ENCODE measurements at regions of chr17 and their contacts with region 1.

Region 1: DNA sequence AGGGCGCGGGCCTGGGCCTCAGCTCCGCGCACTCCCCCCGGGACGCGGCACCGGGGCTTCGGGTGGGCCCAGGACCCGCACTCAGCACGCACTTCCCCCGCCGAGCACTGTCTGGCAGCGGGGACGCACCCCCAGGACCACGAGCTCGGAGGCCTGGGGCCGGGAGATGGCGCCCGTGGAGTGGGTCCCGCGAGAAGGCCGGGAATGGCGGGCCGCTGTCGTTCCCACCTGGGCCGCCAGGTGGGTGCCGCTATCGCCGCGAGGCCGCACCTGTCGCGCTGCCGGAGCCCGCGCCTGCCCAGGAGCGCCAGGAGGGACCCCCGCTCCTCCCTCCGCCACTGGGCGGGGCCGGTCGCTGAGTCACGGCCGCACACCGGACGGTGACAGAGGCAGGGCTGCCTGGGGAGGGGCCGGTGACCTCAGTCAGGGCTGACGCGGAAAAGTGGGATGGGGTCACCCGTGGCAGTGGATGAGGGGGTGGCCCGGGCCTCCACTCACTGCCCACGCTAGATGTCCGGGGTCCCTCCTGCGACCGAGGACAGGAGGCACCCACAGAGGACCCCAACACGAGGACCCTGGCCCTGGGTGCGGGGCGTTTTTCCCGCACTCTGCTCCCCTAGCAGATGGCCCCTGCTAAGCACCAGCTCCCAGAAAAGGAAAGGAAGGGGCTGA is 6.8 kb upstream of the ACTG1 start:
- DNase-seq: peak; percentile 59 to 86
- ATAC-seq: peak; percentile 41 to 61 (median 52)
- H3K4me3 ChIP-seq: peak overlapping the region; percentile 38
- H3K4me3 Mint-ChIP-seq: peak overlapping the region; percentile 37
- H3K27ac ChIP-seq: peak overlapping the region; percentile 46
- H3K27ac Mint-ChIP-seq: peak overlapping the region in 1 of 2 donors; percentile 45
- H3K4me1 ChIP-seq: peaks cover 53% of the 10 kb centered on the region
- H3K4me1 Mint-ChIP-seq: peaks cover 16 to 30% of the 10 kb centered on the region in 2 donors
- H3K27me3 ChIP-seq: peaks cover 9% of the 10 kb centered on the region
- H3K27me3 Mint-ChIP-seq: no peaks in the 10 kb centered on the region
- CTCF ChIP-seq: peak; percentile 45

Region 2: DNA sequence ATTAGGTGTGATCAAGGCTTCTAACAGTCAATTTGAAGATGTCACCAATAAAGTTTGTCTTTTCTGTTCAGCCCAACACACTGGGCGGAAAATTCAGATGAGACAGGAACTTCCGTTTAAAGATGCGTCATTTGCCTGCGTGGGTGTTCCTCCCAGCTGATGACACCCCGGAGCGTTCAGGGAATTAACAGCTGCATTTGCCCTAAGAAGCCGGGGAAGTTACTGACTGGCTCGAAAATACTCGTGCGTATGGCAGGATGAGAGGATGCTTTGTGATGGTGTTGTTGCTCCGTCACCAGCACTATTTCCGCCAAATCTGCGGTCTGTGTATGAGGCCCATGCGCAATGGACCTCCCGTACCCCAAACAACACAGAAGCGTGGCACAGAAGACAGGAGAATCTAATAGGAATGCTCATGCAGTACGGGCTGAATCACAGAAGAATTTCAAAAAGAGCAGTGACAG is 366.0 kb before region 1 on chr17:
- intact Hi-C with region 1: no loop called
- DNase-seq: peak in 1 of 2 donors; percentile 40
- ATAC-seq: no peak
- H3K4me3 ChIP-seq: no peak overlapping the region
- H3K4me3 Mint-ChIP-seq: no peak overlapping the region
- H3K27ac ChIP-seq: no peak overlapping the region
- H3K27ac Mint-ChIP-seq: no peak overlapping the region
- H3K4me1 ChIP-seq: peaks cover 23% of the 10 kb centered on the region
- H3K4me1 Mint-ChIP-seq: peaks cover 8 to 22% of the 10 kb centered on the region in 2 donors
- H3K27me3 ChIP-seq: no peaks in the 10 kb centered on the region
- H3K27me3 Mint-ChIP-seq: no peaks in the 10 kb centered on the region
- CTCF ChIP-seq: no peak

Region 3: DNA sequence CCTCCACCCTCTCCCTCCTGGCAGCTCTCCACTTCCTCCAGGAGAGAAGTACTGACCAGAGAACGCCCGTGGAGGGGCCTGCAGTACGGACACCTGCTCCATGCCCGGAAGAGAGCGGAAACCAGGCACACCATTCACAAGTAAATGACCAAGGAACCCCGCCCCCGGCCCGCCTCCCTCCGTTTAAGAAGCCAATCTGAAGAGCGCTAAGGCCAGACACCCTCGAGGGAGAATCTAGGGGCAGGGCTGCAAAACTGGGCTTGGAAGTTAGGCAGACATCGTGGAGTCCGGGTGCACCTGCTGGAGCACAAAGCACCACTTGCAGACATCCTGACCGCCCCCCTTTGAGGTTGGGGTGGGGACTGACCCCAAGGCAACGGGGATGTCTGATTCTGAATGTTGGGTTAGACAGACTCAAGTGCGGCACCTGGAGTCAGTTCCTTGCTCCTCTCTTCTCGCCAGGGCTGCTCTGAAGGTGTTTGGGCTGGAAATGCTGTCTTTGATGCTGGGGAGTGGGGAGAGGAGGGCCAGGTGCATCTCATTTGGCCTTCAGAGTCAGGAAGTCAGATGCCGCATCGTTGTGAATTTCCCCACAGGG is 33.7 kb after region 1 on chr17:
- intact Hi-C with region 1: loop called (anchors 2 kb)
- DNase-seq: peak; percentile 55 to 90
- ATAC-seq: peak; percentile 68 to 79 (median 71)
- H3K4me3 ChIP-seq: peak overlapping the region; percentile 78
- H3K4me3 Mint-ChIP-seq: peak overlapping the region; percentile 93
- H3K27ac ChIP-seq: peak overlapping the region; percentile 57
- H3K27ac Mint-ChIP-seq: peak overlapping the region; percentile 85 to 87
- H3K4me1 ChIP-seq: peaks cover 30% of the 10 kb centered on the region
- H3K4me1 Mint-ChIP-seq: peaks cover 24 to 32% of the 10 kb centered on the region in 2 donors
- H3K27me3 ChIP-seq: no peaks in the 10 kb centered on the region
- H3K27me3 Mint-ChIP-seq: no peaks in the 10 kb centered on the region
- CTCF ChIP-seq: peak; percentile 21

Measured in natural killer cell (primary cell).